Caco-2 (cell line): ENCODE measurements at regions of chr1 and their contacts with region 1.

Region 1: DNA sequence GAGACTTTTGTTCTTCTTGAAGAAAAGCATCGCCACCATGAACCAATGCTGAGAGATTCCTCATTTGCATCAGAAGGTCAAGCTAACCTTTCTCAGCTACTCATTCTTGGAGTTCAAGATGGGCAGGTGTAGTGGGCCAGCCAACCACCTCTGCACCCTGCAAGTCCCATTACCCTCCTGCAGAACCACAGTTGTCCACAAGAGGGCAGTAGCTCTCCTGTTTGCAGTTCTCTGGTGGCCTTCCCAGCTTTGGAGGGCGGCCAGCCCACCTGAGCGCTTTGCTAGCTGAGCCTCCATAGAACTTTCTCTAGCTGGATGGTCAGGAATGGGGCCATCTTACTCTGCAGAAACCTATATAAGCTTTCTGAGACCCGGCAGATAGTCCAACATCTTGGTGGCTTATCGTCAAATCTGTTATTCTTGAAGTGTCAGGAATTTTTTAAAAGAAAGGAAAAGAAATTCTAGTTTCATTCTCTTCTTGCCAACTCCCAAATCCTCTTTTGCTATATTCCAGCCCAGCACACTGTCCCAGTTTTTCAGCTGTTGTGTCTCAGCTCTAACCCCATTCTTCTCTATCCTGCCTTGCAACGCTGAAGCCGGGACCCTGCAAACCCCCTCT is 11.0 kb upstream of the LMX1A start:
- DNase-seq: peak; percentile 70 to 80
- H3K4me3 ChIP-seq: no peak overlapping the region
- H3K4me3 Mint-ChIP-seq: no peak overlapping the region
- H3K27ac Mint-ChIP-seq: no peak overlapping the region
- H3K4me1 ChIP-seq: no peaks in the 10 kb centered on the region
- H3K4me1 Mint-ChIP-seq: no peaks in the 10 kb centered on the region
- H3K27me3 ChIP-seq: no peaks in the 10 kb centered on the region
- H3K27me3 Mint-ChIP-seq: peaks cover 4% of the 10 kb centered on the region
- CTCF ChIP-seq: peak; percentile 84 to 95

Region 2: DNA sequence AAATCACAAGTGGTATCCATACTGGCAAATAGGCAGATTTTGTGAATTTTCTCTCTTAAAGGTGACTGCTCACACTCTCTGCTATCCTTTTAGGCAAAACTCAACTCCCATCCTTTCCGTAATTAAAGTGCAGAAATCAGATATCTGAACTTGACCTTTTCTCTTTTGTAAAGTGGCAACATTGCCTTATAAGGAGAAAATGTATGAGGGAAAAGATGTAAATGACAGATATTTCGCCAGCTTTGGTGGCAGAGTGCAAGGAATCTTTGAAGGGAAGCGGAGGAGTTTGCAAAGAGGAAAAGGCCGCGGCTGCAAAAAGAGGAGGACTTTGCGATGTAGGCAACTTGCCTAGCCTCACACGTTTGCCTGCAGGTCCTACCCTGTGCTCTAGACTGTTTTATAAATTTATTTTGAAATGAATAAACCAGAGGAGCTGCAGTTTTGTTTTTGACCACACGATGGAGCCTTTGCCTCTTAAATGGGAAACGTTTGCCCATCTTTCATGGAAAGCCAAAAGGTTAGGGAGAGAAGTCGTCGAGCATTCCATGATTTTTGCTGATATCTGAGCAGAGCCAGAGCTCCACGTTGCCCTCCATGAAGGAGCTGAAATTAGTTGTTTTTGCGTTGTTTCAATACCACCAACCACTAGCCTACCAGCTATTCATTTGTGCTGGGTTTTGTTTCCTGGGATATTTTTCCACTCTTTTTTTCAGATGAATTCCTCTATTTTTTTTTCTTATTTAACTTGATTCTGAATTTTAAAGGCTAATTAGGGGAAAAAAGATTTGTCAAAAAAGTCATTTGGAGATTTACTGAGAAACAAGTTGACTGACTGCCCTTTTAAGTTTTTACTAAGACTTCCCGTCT is 253.2 kb before region 1 on chr1:
- CTCF ChIA-PET with region 1: interaction called, 9 read pairs
- POLR2A ChIA-PET with region 1: no interaction called
- intact Hi-C with region 1: loop called (anchors 1 kb)
- DNase-seq: peak; percentile 54 to 72
- H3K4me3 ChIP-seq: no peak overlapping the region
- H3K4me3 Mint-ChIP-seq: no peak overlapping the region
- H3K27ac Mint-ChIP-seq: no peak overlapping the region
- H3K4me1 ChIP-seq: peaks cover 2% of the 10 kb centered on the region
- H3K4me1 Mint-ChIP-seq: no peaks in the 10 kb centered on the region
- H3K27me3 ChIP-seq: no peaks in the 10 kb centered on the region
- H3K27me3 Mint-ChIP-seq: peaks cover 5% of the 10 kb centered on the region
- CTCF ChIP-seq: peak; percentile 64 to 91

Region 3: DNA sequence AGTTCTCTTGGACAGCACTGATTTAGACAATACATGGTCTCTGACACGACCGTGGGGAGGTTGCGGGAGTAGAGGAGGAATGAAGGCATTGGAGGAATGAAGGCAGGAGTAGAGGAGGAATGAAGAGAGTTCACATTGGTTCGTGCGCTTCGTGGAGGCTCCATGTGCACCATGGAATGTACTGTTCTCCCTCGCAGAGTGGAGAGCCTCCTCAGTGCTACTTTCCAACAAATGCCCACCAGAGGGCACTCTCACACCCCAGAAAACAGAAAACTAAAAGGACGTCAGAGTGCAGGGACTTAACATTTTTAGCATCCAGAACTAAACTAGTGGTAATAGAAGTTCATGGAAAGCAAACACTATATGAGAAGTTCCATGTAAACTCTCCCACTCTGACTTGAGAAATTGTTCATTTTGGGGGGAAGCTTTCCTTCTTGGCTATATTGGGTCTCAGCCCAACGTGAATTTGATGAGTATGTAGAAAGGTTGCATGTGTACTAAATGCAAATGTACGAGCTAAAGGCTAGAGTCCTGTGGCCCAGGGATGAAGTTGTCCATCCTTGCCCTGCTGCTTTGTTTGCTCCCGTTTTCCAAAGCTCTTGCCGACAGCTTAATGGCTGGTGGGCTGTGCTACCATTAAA is 222.6 kb before region 1 on chr1:
- CTCF ChIA-PET with region 1: interaction called, 3 read pairs
- POLR2A ChIA-PET with region 1: no interaction called
- intact Hi-C with region 1: loop called (anchors 2 kb)
- DNase-seq: peak; percentile 61 to 76
- H3K4me3 ChIP-seq: no peak overlapping the region
- H3K4me3 Mint-ChIP-seq: no peak overlapping the region
- H3K27ac Mint-ChIP-seq: no peak overlapping the region
- H3K4me1 ChIP-seq: peaks cover 2% of the 10 kb centered on the region; the same call in 1 of the 2 replicates
- H3K4me1 Mint-ChIP-seq: peaks cover 20% of the 10 kb centered on the region
- H3K27me3 ChIP-seq: no peaks in the 10 kb centered on the region
- H3K27me3 Mint-ChIP-seq: peaks cover 3% of the 10 kb centered on the region
- CTCF ChIP-seq: peak; percentile 76 to 80

Region 4: GRCh38 chr1:165257969-165258459 is 109.5 kb before region 1 on chr1:
- CTCF ChIA-PET with region 1: interaction called, 6 read pairs
- POLR2A ChIA-PET with region 1: no interaction called
- intact Hi-C with region 1: loop called (anchors 1 kb)
- DNase-seq: peak; percentile 63 to 70
- H3K4me3 ChIP-seq: no peak overlapping the region
- H3K4me3 Mint-ChIP-seq: no peak overlapping the region
- H3K27ac Mint-ChIP-seq: no peak overlapping the region
- H3K4me1 ChIP-seq: no peaks in the 10 kb centered on the region
- H3K4me1 Mint-ChIP-seq: peaks cover 7% of the 10 kb centered on the region
- H3K27me3 ChIP-seq: no peaks in the 10 kb centered on the region
- H3K27me3 Mint-ChIP-seq: peaks cover 8% of the 10 kb centered on the region
- CTCF ChIP-seq: peak; percentile 54 to 69

Region 5: GRCh38 chr1:165306541-165307434 is 60.7 kb before region 1 on chr1:
- CTCF ChIA-PET with region 1: no interaction called
- POLR2A ChIA-PET with region 1: no interaction called
- intact Hi-C with region 1: loop called (anchors 5 kb)
- DNase-seq: no peak
- H3K4me3 ChIP-seq: no peak overlapping the region
- H3K4me3 Mint-ChIP-seq: no peak overlapping the region
- H3K27ac Mint-ChIP-seq: no peak overlapping the region
- H3K4me1 ChIP-seq: no peaks in the 10 kb centered on the region
- H3K4me1 Mint-ChIP-seq: no peaks in the 10 kb centered on the region
- H3K27me3 ChIP-seq: no peaks in the 10 kb centered on the region
- H3K27me3 Mint-ChIP-seq: peaks cover 6% of the 10 kb centered on the region
- CTCF ChIP-seq: no peak

Region 6: GRCh38 chr1:165424454-165425216 is 57.2 kb after region 1 on chr1:
- CTCF ChIA-PET with region 1: no interaction called
- POLR2A ChIA-PET with region 1: no interaction called
- intact Hi-C with region 1: no loop called
- DNase-seq: no peak
- H3K4me3 ChIP-seq: no peak overlapping the region
- H3K4me3 Mint-ChIP-seq: no peak overlapping the region
- H3K27ac Mint-ChIP-seq: no peak overlapping the region
- H3K4me1 ChIP-seq: no peaks in the 10 kb centered on the region
- H3K4me1 Mint-ChIP-seq: no peaks in the 10 kb centered on the region
- H3K27me3 ChIP-seq: peaks cover 2% of the 10 kb centered on the region; the same call in 1 of the 2 replicates
- H3K27me3 Mint-ChIP-seq: peaks cover 12% of the 10 kb centered on the region
- CTCF ChIP-seq: no peak

Region 7: DNA sequence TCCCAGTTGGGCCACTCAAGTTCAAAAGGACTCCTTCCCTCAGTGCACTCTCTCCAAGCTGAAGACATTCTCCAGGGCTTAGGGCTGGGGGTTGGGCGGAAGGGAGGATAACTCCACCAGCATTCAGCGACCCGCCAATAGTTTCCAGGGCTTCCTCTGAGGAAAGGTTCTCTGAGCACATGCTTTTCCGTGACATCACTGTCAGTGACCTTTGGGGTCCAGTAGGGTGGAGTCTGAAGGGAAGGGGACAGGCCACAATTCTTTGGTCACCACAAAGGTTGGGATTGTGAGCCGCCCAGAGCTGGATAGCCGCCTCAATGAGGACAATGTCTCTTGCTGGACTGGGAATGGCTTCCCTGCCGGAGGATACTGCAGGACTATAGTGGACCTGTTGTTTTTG is 100.2 kb after region 1 on chr1:
- CTCF ChIA-PET with region 1: no interaction called
- POLR2A ChIA-PET with region 1: no interaction called
- intact Hi-C with region 1: no loop called
- DNase-seq: no peak
- H3K4me3 ChIP-seq: no peak overlapping the region
- H3K4me3 Mint-ChIP-seq: no peak overlapping the region
- H3K27ac Mint-ChIP-seq: no peak overlapping the region
- H3K4me1 ChIP-seq: no peaks in the 10 kb centered on the region
- H3K4me1 Mint-ChIP-seq: no peaks in the 10 kb centered on the region
- H3K27me3 ChIP-seq: no peaks in the 10 kb centered on the region
- H3K27me3 Mint-ChIP-seq: peaks cover 23% of the 10 kb centered on the region
- CTCF ChIP-seq: no peak